ENCODE measurements at regions of chr6 and their contacts with region 1.

Region 1: DNA sequence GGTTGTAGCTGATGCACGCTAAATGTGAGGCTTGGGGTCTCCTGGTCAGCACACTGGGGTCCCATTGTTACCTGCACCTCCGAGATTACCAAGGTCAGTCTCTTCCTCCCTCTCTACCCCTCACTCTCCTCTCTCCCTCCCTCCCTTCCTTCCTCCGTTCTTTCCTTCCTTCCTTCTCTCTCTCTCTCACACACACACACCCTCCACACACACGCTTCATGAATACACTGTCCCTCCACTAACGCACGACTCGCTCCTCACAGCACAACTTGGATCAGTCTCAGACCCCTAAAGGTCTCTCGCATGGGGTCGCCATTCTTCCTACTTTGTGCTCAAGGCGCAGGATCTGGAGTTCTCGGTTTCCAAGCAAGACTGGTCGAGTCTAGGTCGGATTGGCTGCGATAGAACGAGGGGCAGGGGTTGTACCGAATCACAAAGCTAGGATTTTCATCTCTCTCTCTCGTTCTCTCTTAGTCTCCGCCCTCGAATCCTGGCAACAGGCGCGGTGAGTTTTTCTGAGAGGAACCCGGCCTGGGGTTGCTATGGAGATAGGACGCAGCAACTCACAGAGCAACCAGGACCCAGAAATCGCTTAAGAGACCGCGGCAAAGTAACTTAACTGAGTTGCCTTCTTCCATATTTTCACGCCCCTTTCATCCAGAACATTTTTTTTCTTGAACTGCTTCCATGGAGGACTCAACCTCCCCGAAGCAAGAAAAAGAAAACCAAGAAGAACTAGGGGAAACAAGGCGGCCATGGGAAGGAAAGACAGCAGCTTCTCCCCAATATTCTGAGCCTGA is at the start of gene RSPH4A:
- DNase-seq: peak; percentile 93 to 96 (median 96)
- H3K4me3 ChIP-seq: peak within 1 kb of the TSS; percentile 46 to 98 (median 77)
- H3K27ac ChIP-seq: peak within 1 kb of the TSS; percentile 20 to 30
- H3K4me1 ChIP-seq: peaks cover 0 to 16% (median 13%) of the 10 kb centered on the region in 4 experiments
- H3K27me3 ChIP-seq: peaks cover 0 to 5% (median 2%) of the 10 kb centered on the region in 5 experiments

Region 2: GRCh38 chr6:116451916-116452315 is 164.2 kb before region 1 on chr6:
- CTCF ChIA-PET with region 1: no interaction called
- POLR2A ChIA-PET with region 1: no interaction called
- DNase-seq: no peak
- H3K4me3 ChIP-seq: no peak overlapping the region
- H3K27ac ChIP-seq: no peak overlapping the region
- H3K4me1 ChIP-seq: peaks cover 32 to 58% (median 37%) of the 10 kb centered on the region in 4 experiments
- H3K27me3 ChIP-seq: no peaks in the 10 kb centered on the region

Region 3: GRCh38 chr6:116648156-116648555 is 32.0 kb after region 1 on chr6:
- CTCF ChIA-PET with region 1: interaction called, 11 read pairs
- POLR2A ChIA-PET with region 1: no interaction called
- DNase-seq: peak in 1 of 3 donors; percentile 35
- H3K4me3 ChIP-seq: peak overlapping the region in 1 of 7 experiments; percentile 54
- H3K27ac ChIP-seq: peak overlapping the region; percentile 58 to 72
- H3K4me1 ChIP-seq: peaks cover 0 to 11% (median 0%) of the 10 kb centered on the region in 4 experiments
- H3K27me3 ChIP-seq: no peaks in the 10 kb centered on the region

Measured in common myeloid progenitor, CD34-positive (primary cell).